AG04449 (cell line): ENCODE measurements at regions of chr19 and their contacts with region 1.

Region 1: GRCh38 chr19:1315470-1316231 is 30.0 kb downstream of the EFNA2 start:
- DNase-seq: no peak
- H3K4me3 ChIP-seq: peak overlapping the region; percentile 20; the same call in 1 of the 2 replicates
- CTCF ChIP-seq: peak; percentile 77

Region 2: DNA sequence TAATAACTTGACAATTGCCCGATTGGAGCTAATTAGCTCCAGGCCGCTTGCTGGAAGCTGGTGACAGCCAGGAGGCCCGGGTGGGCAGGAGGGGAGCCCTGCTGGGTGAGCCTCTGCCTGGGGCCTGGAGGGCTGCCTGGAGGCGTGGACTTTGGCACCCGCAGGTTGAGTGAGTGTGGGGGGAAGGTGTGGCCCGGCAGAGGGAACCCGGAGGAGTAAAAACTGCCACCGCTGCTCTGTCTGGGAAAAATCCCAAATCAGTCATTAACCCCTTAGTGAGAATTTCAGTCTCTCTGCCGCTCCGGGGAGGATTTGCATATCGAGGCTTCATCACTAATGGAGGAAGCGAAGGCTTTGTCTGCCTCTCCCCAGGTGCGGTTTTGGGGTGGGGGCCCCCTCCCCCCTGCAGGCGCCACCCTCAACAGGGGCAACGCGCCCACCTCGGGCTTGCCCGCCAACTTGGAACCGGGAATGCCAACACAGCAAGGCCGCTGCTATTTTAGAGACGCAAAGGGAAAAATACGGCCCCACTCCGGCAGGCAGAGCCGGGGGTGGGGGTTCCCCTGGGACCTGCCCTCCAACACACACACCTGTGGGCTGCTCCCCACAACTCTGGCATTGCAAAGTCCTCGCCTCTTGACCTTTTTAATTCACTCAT is 23.8 kb before region 1 on chr19:
- CTCF ChIA-PET with region 1: no interaction called
- POLR2A ChIA-PET with region 1: no interaction called
- DNase-seq: no peak
- H3K4me3 ChIP-seq: no peak overlapping the region
- CTCF ChIP-seq: no peak

Region 3: DNA sequence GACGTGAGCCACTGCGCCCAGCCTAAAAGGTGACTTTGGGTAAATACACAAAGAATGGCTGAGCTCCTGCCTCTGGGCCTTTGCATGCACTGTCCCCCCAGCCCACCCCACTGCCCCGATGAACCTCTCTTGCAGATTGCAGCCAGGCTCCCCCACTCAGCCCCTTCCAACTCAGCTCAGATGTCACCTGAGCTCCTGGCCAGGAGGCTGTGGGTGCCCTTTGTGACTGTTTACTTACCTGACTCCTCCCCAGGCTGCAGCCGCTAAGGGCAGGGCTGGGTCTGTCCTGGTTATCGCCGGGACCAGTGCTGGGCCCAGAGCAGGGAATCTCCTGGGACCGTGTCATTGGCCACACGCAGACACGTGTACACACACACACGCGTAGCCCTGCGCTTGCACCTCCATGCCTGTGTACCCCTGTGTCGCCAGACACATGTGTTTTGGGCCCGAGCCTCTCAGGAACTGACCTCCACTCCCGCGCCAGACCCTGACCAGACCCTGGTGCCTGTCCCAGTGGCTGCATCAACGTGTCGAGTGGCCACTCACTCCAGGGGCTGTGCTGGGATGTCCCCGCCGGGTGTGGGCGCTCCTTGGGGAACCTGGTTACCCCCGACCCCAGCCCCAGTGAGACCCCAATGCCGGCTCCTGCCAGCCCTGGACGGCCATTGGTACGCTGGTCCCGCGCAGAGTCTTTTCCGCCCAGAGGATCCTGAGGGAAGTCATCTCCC is 11.3 kb before region 1 on chr19:
- CTCF ChIA-PET with region 1: interaction called, 12 read pairs
- POLR2A ChIA-PET with region 1: no interaction called
- DNase-seq: no peak
- H3K4me3 ChIP-seq: no peak overlapping the region
- CTCF ChIP-seq: no peak

Region 4: DNA sequence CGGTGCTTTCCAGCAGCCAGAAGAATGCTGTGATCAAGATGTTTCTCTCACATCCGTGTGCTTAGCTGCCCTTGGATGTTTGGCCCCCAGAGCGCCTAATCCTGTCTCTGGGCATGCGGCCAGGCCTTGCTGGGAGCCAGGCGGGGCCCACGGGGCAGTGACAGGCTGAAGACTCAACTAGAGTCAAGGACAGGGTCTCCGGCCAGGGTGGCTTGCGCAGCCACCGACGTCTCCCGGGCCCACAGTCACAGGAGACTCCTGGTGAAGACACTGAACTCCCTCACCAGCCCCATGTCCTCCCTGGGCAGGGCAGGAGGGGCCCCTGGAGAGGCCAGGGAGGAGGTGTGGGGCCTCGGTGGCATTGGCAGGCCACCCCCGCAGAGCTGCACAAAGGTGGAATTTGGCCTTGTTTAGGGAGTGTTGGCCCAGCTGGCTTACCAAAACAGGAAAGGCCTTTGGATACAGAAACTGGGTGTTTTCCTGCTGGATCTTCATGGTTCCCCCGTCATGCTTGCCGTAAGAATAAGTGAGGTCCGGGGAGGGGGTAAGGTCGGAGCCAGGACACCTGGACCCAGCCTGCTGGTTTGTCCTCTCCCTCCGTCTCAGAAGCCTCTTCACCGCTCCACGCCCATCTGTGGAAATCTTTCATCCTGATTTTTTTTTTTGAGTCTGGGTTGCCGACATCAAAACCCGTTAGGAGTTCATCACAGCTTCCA is 58.0 kb after region 1 on chr19:
- CTCF ChIA-PET with region 1: interaction called, 11 read pairs
- POLR2A ChIA-PET with region 1: no interaction called
- DNase-seq: no peak
- H3K4me3 ChIP-seq: no peak overlapping the region
- CTCF ChIP-seq: no peak